OCI-LY7 (cell line): ENCODE measurements at regions of chr3 and their contacts with region 1.

Region 1: DNA sequence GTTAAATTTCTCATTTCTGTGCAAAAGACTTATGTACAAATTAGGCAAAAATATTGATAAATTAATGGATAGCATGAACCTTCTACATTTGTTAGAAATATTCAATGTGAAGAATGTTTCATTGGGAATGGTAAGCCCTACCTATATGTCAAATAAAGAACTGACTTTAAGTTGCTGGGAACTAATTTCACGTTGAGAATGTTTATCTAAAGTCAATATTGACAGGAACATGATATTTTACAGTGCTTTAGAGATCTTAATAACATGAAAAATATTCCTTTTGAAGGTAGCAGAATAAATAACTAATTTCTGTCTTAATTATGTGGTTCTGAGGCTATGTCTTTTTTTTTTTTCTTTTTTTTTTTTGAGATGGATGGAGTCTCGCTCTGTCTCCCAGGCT is 22.0 kb upstream of the GPR149 start:
- DNase-seq: no peak
- H3K4me3 ChIP-seq: no peak overlapping the region
- H3K27ac ChIP-seq: no peak overlapping the region
- H3K4me1 ChIP-seq: no peaks in the 10 kb centered on the region
- CTCF ChIP-seq: no peak

Region 2: DNA sequence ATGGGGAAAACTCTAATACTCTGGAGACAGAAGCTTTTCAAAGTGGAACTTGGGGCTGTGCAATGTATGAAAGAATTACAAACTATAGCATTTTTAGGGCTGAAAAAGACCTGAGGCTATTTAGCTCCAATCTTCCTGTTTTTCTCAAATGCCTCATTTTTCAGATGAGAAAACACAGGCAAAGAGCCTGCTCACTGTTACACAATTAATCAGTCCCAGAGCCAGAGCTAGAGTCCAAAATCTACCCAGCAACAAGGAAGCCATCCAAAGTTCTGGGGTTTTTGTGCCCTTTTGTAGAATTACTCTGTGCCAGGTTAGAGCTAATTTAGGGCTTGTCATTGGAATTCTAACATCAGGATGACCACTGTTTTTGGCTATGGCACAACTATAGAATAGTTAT is 67.5 kb before region 1 on chr3:
- CTCF ChIA-PET with region 1: no interaction called
- POLR2A ChIA-PET with region 1: no interaction called
- intact Hi-C with region 1: loop called (anchors 10 kb)
- DNase-seq: no peak
- H3K4me3 ChIP-seq: no peak overlapping the region
- H3K27ac ChIP-seq: no peak overlapping the region
- H3K4me1 ChIP-seq: no peaks in the 10 kb centered on the region
- CTCF ChIP-seq: no peak

Region 3: DNA sequence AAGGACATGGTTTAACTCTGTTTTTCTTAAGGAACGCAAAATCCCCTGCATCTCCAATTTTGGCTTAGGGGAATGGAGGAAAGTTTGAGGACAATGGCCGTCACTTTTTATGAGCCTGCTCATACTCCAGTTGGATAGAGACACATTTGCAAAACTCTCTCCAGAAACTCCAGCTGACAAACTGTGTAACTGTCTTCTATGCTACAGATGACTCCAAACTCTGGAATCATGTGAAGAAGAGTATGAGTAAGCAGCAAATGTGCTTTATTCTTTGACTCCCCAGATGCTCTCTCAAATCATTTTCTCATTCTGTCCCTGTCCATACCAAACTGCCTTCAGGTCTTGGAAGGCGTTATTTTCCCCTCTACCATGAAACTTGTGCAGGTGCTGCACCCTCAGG is 204.5 kb after region 1 on chr3:
- CTCF ChIA-PET with region 1: no interaction called
- POLR2A ChIA-PET with region 1: no interaction called
- intact Hi-C with region 1: no loop called
- DNase-seq: no peak
- H3K4me3 ChIP-seq: no peak overlapping the region
- H3K27ac ChIP-seq: no peak overlapping the region
- H3K4me1 ChIP-seq: no peaks in the 10 kb centered on the region
- CTCF ChIP-seq: no peak